ENCODE measurements at regions of chr3 and their contacts with region 1.

Region 1: DNA sequence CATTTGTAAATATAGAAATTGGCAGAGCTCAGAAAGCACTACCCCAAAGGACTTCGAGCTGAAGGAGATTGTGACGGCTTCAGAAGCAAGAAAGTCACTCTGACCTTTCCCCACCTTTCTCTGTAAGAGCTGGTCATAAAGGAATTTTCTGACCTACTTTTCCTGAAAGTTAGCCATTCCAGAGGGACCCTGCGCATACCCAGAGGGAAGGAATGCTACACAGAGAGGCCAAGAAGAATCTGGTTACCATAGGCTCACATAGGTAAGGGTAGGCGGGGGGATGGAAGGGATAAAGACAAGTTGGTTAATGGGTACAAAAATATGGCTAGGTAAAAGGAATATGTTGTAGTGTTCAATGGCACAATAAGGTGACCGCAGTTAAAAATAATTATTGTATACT is 1080.3 kb downstream of the ZPLD1 start:
- DNase-seq: no peak
- ATAC-seq: no peak
- H3K4me3 ChIP-seq: no peak overlapping the region
- H3K27ac ChIP-seq: no peak overlapping the region
- H3K4me1 ChIP-seq: no peaks in the 10 kb centered on the region
- H3K27me3 ChIP-seq: no peaks in the 10 kb centered on the region
- CTCF ChIP-seq: no peak
- POLR2A ChIP-seq: no peak
- RAD21 ChIP-seq: no peak

Region 2: GRCh38 chr3:104987859-104988258 is 1472.7 kb after region 1 on chr3:
- CTCF ChIA-PET with region 1: no interaction called
- POLR2A ChIA-PET with region 1: no interaction called
- dilution Hi-C with region 1: no loop called
- in situ Hi-C with region 1: no loop called
- intact Hi-C with region 1: loop called (anchors 10 kb)
- DNase-seq: no peak
- ATAC-seq: no peak
- H3K4me3 ChIP-seq: no peak overlapping the region
- H3K27ac ChIP-seq: no peak overlapping the region
- H3K4me1 ChIP-seq: no peaks in the 10 kb centered on the region
- H3K27me3 ChIP-seq: no peaks in the 10 kb centered on the region
- CTCF ChIP-seq: no peak
- POLR2A ChIP-seq: no peak
- RAD21 ChIP-seq: no peak

Measured in IMR-90 (cell line).